HCT116 (cell line): ENCODE measurements at regions of chr12 and their contacts with region 1.

Region 1: DNA sequence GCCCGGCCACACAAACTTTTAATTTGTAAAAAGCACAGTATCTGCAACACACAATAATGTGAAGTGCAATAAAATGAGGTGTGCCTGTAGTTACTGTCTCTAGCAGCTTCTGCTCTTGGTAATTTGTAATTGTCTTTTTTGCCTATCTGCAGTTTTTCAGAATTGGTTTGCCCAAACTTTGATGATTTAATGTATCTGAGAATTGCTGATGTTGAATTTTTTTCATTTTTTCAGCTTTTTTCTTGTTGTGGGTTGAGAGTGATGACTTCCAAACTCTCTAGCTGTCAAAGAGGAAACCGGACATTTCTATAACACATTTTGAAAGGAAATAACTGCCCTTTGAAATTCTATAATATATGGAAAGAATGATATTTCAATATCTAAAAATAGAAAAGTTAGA is 236.9 kb downstream of the RERGL start:
- DNase-seq: no peak
- ATAC-seq: no peak
- H3K4me3 ChIP-seq: no peak overlapping the region
- H3K27ac ChIP-seq: no peak overlapping the region
- H3K4me1 ChIP-seq: no peaks in the 10 kb centered on the region
- H3K27me3 ChIP-seq: no peaks in the 10 kb centered on the region
- CTCF ChIP-seq: no peak
- POLR2A ChIP-seq: no peak
- RAD21 ChIP-seq: no peak

Region 2: DNA sequence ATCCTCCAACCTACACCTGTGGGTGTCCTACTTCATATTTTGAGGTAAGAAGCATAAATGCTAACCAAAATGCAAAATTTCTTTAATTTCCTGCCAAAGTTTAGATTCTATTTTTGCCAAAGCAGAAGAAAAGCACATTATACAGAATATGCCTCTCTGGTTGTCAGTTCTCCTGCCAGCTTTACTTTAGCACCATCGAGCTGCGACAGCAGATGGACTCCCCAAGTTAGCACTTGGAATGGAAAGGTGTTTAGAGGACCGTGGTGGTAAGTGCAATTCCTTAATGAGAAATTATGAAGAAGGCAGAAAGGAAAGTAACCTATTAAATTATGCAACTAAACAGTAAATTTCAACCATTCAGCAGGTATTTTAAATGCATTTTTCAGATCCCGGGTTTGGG is 89.7 kb before region 1 on chr12:
- CTCF ChIA-PET with region 1: no interaction called
- POLR2A ChIA-PET with region 1: no interaction called
- RAD21 ChIA-PET with region 1: no interaction called
- intact Hi-C with region 1: loop called (anchors 2 kb)
- DNase-seq: no peak
- ATAC-seq: no peak
- H3K4me3 ChIP-seq: no peak overlapping the region
- H3K27ac ChIP-seq: no peak overlapping the region
- H3K4me1 ChIP-seq: no peaks in the 10 kb centered on the region
- H3K27me3 ChIP-seq: no peaks in the 10 kb centered on the region
- CTCF ChIP-seq: no peak
- POLR2A ChIP-seq: no peak
- RAD21 ChIP-seq: no peak